Left cardiac atrium (tissue), 4 donors: ENCODE measurements at regions of chr2 and their contacts with region 1.

Region 1: DNA sequence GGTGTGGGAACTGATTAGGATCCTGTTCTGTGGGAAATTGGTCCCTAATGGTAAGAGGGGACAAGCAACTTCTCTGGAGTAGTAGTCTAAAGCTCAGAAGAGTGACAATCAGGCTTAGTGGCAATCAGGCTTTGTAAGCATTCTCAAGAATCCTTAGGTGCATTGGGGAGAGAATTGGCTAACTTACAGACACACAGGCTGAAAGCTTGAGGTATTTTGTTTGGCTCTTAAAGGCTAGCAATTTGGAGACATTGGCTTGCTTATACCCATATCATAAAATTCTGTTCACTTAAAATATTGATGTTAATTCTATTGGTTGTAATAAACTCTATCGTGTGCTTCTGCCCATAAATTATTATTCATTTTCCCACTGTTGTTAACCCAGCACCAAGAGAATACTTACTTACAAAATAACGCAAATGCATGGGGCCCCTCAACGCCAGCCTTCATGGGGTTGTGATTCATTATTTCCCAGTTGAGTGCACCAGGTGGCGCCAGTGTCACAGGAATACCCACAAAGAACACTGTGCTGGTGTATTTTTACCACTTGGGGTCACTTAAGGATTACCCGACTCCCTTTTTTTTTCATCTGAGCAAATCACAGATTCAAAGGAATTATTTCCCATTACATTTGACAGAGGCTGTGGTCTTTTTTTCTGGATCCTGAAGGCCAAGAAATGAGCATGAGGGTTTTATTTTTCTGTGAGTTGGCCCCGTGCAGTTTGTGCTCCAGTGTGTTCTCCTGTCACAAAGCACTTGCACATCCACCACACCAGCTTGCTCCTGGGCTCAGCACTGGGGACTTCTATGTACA is 45.5 kb downstream of the DDX1 start:
- DNase-seq: peak; percentile 77
- ATAC-seq: peak; percentile 80 to 85

Region 2: GRCh38 chr2:15719566-15720313 is 82.6 kb after region 1 on chr2:
- intact Hi-C with region 1: no loop called
- DNase-seq: no peak
- ATAC-seq: no peak

Region 3: GRCh38 chr2:15912205-15912604 is 275.0 kb after region 1 on chr2:
- intact Hi-C with region 1: loop called in 1 of 2 experiments (anchors 10 kb)
- DNase-seq: peak; percentile 72
- ATAC-seq: peak; percentile 80 to 93

Region 4: GRCh38 chr2:16281451-16282336 is 644.5 kb after region 1 on chr2:
- intact Hi-C with region 1: loop called (anchors 5 to 10 kb)
- DNase-seq: no peak
- ATAC-seq: peak; percentile 79 to 82

Region 5: GRCh38 chr2:16487686-16488085 is 850.5 kb after region 1 on chr2:
- intact Hi-C with region 1: loop called in 1 of 2 experiments (anchors 5 kb)
- DNase-seq: peak; percentile 31
- ATAC-seq: peak; percentile 41 to 64

Region 6: GRCh38 chr2:16507655-16508489 is 870.7 kb after region 1 on chr2:
- intact Hi-C with region 1: loop called in 1 of 2 experiments (anchors 2 kb)
- DNase-seq: peak; percentile 51
- ATAC-seq: peak; percentile 94

Region 7: GRCh38 chr2:16608661-16609643 is 971.8 kb after region 1 on chr2:
- intact Hi-C with region 1: loop called in 1 of 2 experiments (anchors 5 kb)
- DNase-seq: peak; percentile 86
- ATAC-seq: peak; percentile 88 to 90